Activated B cell treated with CpG ODN at 0.5 μM for 24 hours (primary cell): ENCODE measurements at regions of chr5 and their contacts with region 1.

Region 1: DNA sequence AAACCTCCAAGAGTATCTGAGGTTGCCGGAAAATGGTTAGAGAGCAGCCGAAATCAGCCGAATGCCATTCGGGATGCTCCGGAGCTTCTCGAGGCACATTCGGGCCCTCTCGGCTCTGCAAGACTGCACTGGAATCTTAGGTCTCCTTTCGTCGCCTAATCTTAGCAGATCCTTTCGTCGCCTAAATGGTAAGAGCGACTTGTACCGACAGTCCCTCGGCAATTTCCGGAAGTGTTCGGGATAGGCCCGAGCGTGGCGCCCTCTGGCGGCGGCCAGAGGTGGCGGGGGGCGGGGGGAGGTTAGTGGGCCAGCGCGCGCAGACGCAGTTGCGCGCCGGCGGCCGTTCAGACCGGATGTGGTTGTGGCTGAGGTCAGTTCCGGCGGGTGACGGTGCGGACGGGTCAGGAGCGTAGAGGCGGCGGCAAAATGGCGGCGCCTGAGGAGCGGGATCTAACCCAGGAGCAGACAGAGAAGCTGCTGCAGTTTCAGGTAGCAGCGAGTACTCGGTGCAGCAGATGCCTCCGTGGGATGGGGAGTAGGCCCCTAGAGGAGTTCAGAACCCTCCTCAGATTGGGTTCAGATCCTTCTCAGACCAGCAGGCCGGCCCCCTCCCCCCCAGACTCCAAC is at the start of gene FAF2:
- DNase-seq: peak; percentile 100
- ATAC-seq: peak; percentile 94
- H3K4me3 Mint-ChIP-seq: peak within 1 kb of the TSS; percentile 98
- H3K27ac Mint-ChIP-seq: peak within 1 kb of the TSS; percentile 96
- H3K4me1 Mint-ChIP-seq: peaks cover 32% of the 10 kb centered on the region
- H3K27me3 Mint-ChIP-seq: peaks cover 2% of the 10 kb centered on the region
- CTCF ChIP-seq: peak; percentile 49
- total RNA-seq, gene FAF2: 35.6 and 39.0 TPM in 2 replicates

Region 2: GRCh38 chr5:176361437-176362232 is 86.5 kb before region 1 on chr5 and contains the start of gene KIAA1191:
- CTCF ChIA-PET with region 1: no interaction called
- POLR2A ChIA-PET with region 1: interaction called, 8 read pairs
- intact Hi-C with region 1: loop called (anchors 1 kb)
- DNase-seq: peak; percentile 86
- ATAC-seq: peak; percentile 87
- H3K4me3 Mint-ChIP-seq: peak within 1 kb of the TSS; percentile 99
- H3K27ac Mint-ChIP-seq: peak within 1 kb of the TSS; percentile 98
- H3K4me1 Mint-ChIP-seq: peaks cover 28% of the 10 kb centered on the region
- H3K27me3 Mint-ChIP-seq: no peaks in the 10 kb centered on the region
- CTCF ChIP-seq: no peak
- total RNA-seq, gene KIAA1191: 56.6 and 57.5 TPM in 2 replicates

Region 3: GRCh38 chr5:176529741-176530141 is 81.6 kb after region 1 on chr5:
- CTCF ChIA-PET with region 1: interaction called, 3 read pairs
- POLR2A ChIA-PET with region 1: interaction called, 53 read pairs
- intact Hi-C with region 1: no loop called
- DNase-seq: peak; percentile 34
- ATAC-seq: peak; percentile 19
- H3K4me3 Mint-ChIP-seq: peak overlapping the region; percentile 19
- H3K27ac Mint-ChIP-seq: peak overlapping the region; percentile 85
- H3K4me1 Mint-ChIP-seq: peaks cover 52% of the 10 kb centered on the region
- H3K27me3 Mint-ChIP-seq: no peaks in the 10 kb centered on the region
- CTCF ChIP-seq: no peak

Region 4: DNA sequence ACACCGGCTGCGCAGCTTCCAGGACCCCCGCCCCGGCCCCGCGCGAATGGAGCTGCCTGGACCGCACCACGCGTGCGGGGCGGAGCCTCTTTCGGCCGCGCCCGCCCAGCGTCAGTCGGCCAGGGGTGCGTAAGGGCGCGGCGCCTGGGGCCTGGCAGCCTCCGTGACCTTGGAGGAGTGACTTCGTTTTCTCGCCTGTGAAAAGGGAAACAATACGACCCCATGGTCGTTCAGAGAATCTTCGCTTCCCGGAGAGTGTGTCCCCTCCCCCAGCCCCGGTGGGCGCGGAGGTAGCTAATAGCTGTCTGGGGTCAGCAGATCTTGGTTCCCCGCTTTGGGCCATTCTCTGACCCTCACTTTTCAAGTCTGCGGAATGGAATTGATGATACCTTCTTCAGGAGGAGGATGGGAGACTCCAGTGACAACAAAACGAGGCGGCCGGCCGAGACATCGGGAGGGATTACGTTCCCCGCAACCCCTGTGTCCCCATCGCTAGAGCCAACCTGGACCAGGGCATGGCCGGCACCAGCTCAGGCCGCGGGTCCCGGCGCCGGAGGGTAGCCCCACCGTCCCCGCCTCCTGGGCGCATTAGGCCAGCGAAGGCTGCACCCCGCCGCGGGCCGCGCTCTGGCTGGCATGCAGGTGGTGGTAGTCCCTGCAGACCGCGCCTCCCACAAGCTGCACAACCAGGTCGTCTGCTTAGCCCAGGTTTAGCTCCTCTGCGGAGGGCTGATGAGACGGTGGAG is 95.5 kb after region 1 on chr5:
- CTCF ChIA-PET with region 1: interaction called, 13 read pairs
- POLR2A ChIA-PET with region 1: interaction called, 25 read pairs
- intact Hi-C with region 1: loop called (anchors 1 kb)
- DNase-seq: peak; percentile 76
- ATAC-seq: peak; percentile 80
- H3K4me3 Mint-ChIP-seq: peak overlapping the region; percentile 93
- H3K27ac Mint-ChIP-seq: peak overlapping the region; percentile 94
- H3K4me1 Mint-ChIP-seq: peaks cover 44% of the 10 kb centered on the region
- H3K27me3 Mint-ChIP-seq: no peaks in the 10 kb centered on the region
- CTCF ChIP-seq: no peak

Region 5: GRCh38 chr5:176647030-176647866 is 199.2 kb after region 1 on chr5 and contains the start of gene TSPAN17:
- CTCF ChIA-PET with region 1: interaction called, 3 read pairs
- POLR2A ChIA-PET with region 1: interaction called, 7 read pairs
- intact Hi-C with region 1: loop called (anchors 1 kb)
- DNase-seq: peak; percentile 99
- ATAC-seq: peak; percentile 97
- H3K4me3 Mint-ChIP-seq: peak within 1 kb of the TSS; percentile 90
- H3K27ac Mint-ChIP-seq: peak within 1 kb of the TSS; percentile 91
- H3K4me1 Mint-ChIP-seq: peaks cover 45% of the 10 kb centered on the region
- H3K27me3 Mint-ChIP-seq: no peaks in the 10 kb centered on the region
- CTCF ChIP-seq: no peak
- total RNA-seq, gene TSPAN17: 20.7 and 27.7 TPM in 2 replicates